Psoas muscle (tissue), 8 donors: ENCODE measurements at regions of chr1 and their contacts with region 1.

Region 1: DNA sequence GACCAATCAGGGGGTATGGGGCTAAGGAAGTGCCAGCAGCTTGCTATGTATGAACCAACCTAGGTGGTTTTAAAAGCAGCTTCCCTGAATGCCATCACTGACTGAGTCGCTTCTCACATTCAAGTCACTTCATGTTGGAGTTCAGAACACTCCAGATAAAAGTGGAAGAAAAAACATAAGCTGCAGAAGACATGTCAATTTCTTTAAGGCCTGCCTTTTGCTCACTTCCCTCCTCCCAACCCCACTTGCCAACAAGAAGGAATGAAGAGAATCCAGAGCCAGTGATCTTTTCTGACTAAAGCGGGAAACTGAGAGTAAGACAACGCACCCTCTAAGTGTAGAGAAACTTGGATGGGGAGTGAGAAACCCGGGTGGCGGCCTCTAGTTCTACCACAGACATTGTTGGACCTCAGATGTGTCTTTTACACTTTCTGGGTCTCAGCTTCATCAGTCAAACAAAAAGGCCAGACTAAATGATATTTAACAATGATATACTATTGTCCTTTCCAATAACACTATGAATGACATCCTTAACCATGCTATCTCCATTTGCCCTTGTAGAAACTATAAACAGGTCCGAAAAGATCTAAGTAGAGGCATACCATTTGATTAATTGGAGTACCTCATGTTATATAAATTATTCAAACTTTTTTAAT is 54.1 kb downstream of the LUZP1 start:
- DNase-seq: no peak
- ATAC-seq: no peak
- H3K4me3 ChIP-seq: no peak overlapping the region
- H3K27ac ChIP-seq: no peak overlapping the region
- H3K4me1 ChIP-seq: no peaks in the 10 kb centered on the region
- H3K27me3 ChIP-seq: no peaks in the 10 kb centered on the region
- CTCF ChIP-seq: no peak

Region 2: GRCh38 chr1:23026573-23026972 is 88.0 kb before region 1 on chr1:
- intact Hi-C with region 1: no loop called
- DNase-seq: no peak
- ATAC-seq: no peak
- H3K4me3 ChIP-seq: no peak overlapping the region
- H3K27ac ChIP-seq: no peak overlapping the region
- H3K4me1 ChIP-seq: peaks cover 9% of the 10 kb centered on the region
- H3K27me3 ChIP-seq: no peaks in the 10 kb centered on the region
- CTCF ChIP-seq: no peak

Region 3: GRCh38 chr1:23149114-23149513 is 34.6 kb after region 1 on chr1:
- intact Hi-C with region 1: loop called in 1 of 2 experiments (anchors 5 kb)
- DNase-seq: no peak
- ATAC-seq: no peak
- H3K4me3 ChIP-seq: no peak overlapping the region
- H3K27ac ChIP-seq: no peak overlapping the region
- H3K4me1 ChIP-seq: peaks cover 6% of the 10 kb centered on the region
- H3K27me3 ChIP-seq: no peaks in the 10 kb centered on the region
- CTCF ChIP-seq: no peak